ENCODE measurements at regions of chrX and their contacts with region 1.

Region 1: GRCh38 chrX:54786962-54787361 is 11.1 kb downstream of the ITIH6 start:
- DNase-seq: peak; percentile 8 to 54 (median 32)
- ATAC-seq: peak; percentile 76
- H3K4me3 ChIP-seq: no peak overlapping the region
- H3K4me3 Mint-ChIP-seq: no peak overlapping the region
- H3K27ac ChIP-seq: no peak overlapping the region
- H3K27ac Mint-ChIP-seq: no peak overlapping the region
- H3K4me1 ChIP-seq: no peaks in the 10 kb centered on the region
- H3K4me1 Mint-ChIP-seq: no peaks in the 10 kb centered on the region
- H3K27me3 ChIP-seq: no peaks in the 10 kb centered on the region
- H3K27me3 Mint-ChIP-seq: no peaks in the 10 kb centered on the region
- CTCF ChIP-seq: peak; percentile 38

Region 2: DNA sequence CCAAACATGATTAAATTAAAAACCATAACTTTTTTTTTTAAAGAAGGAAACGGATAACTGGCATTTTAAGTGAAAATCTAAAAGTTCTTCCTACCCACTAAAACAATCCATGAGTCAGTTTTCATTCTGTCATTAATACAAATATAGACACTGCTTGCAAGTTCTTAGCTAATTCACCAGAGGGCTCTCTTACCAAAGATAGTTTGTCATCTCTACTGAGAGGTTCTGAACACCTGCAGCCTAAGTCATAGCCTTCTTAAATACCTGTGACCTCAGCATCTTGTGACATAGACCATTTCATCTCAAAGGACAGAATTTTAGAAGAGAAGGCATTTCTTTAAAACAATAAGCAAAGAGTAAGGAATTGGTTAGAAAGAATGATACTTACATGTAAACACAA is 538.7 kb before region 1 on chrX:
- CTCF ChIA-PET with region 1: no interaction called
- POLR2A ChIA-PET with region 1: no interaction called
- intact Hi-C with region 1: loop called (anchors 2 to 5 kb)
- DNase-seq: peak in 3 of 14 experiments; percentile 8 to 14 (median 13)
- ATAC-seq: peak; percentile 29
- H3K4me3 ChIP-seq: no peak overlapping the region
- H3K4me3 Mint-ChIP-seq: no peak overlapping the region
- H3K27ac ChIP-seq: no peak overlapping the region
- H3K27ac Mint-ChIP-seq: no peak overlapping the region
- H3K4me1 ChIP-seq: no peaks in the 10 kb centered on the region
- H3K4me1 Mint-ChIP-seq: no peaks in the 10 kb centered on the region
- H3K27me3 ChIP-seq: no peaks in the 10 kb centered on the region
- H3K27me3 Mint-ChIP-seq: no peaks in the 10 kb centered on the region
- CTCF ChIP-seq: no peak

Region 3: GRCh38 chrX:54423161-54423888 is 363.6 kb before region 1 on chrX:
- CTCF ChIA-PET with region 1: no interaction called
- POLR2A ChIA-PET with region 1: no interaction called
- intact Hi-C with region 1: loop called in 1 of 2 experiments (anchors 10 kb)
- DNase-seq: peak in 3 of 14 experiments; percentile 12 to 19 (median 17)
- ATAC-seq: no peak
- H3K4me3 ChIP-seq: no peak overlapping the region
- H3K4me3 Mint-ChIP-seq: no peak overlapping the region
- H3K27ac ChIP-seq: no peak overlapping the region
- H3K27ac Mint-ChIP-seq: no peak overlapping the region
- H3K4me1 ChIP-seq: no peaks in the 10 kb centered on the region
- H3K4me1 Mint-ChIP-seq: no peaks in the 10 kb centered on the region
- H3K27me3 ChIP-seq: no peaks in the 10 kb centered on the region
- H3K27me3 Mint-ChIP-seq: peaks cover 5% of the 10 kb centered on the region
- CTCF ChIP-seq: no peak

Region 4: GRCh38 chrX:55039506-55039905 is 252.5 kb after region 1 on chrX:
- CTCF ChIA-PET with region 1: no interaction called
- POLR2A ChIA-PET with region 1: no interaction called
- intact Hi-C with region 1: no loop called
- DNase-seq: no peak
- ATAC-seq: no peak
- H3K4me3 ChIP-seq: no peak overlapping the region
- H3K4me3 Mint-ChIP-seq: no peak overlapping the region
- H3K27ac ChIP-seq: no peak overlapping the region
- H3K27ac Mint-ChIP-seq: no peak overlapping the region
- H3K4me1 ChIP-seq: no peaks in the 10 kb centered on the region
- H3K4me1 Mint-ChIP-seq: no peaks in the 10 kb centered on the region
- H3K27me3 ChIP-seq: no peaks in the 10 kb centered on the region
- H3K27me3 Mint-ChIP-seq: no peaks in the 10 kb centered on the region
- CTCF ChIP-seq: no peak